Esophagus squamous epithelium (tissue), 5 donors: ENCODE measurements at regions of chr10 and their contacts with region 1.

Region 1: DNA sequence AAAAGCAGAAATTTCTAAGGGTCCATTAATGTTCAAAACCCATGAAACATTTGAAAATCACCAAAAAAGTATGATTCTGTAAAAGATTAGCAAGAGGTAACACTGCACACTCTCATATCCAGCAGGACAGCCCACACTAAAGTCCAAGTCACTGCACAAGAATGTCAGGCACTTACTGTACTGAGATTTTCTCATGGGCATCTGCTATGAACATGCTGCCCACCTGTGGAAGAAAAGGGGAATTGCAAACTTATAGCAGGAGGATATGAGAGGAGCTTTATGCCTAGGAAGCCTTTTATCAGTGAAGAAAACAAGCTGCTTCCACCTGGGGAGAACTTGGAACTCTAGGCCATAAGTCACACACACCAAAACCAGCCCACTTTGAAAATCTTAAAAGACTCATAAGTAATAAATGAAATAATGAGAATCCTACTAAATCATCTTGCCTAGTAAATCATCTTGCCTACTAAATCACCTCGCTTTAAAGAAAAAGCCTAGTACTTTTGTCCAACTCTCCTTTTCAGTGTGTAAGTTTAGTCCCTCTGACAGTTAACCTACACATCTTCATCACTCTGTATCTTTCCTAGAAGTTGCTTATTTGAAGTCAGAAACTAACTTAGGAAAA is 46.1 kb downstream of the ARMH3 start:
- DNase-seq: no peak
- H3K4me3 ChIP-seq: no peak overlapping the region
- H3K27ac ChIP-seq: no peak overlapping the region
- H3K4me1 ChIP-seq: peaks cover 0 to 4% (median 0%) of the 10 kb centered on the region in 3 donors
- H3K27me3 ChIP-seq: no peaks in the 10 kb centered on the region
- CTCF ChIP-seq: peak; percentile 74 to 90 (median 86)
- POLR2A ChIP-seq: no peak

Region 2: GRCh38 chr10:101840741-101841453 is 169.0 kb before region 1 on chr10:
- intact Hi-C with region 1: loop called (anchors 10 kb)
- DNase-seq: no peak
- H3K4me3 ChIP-seq: peak overlapping the region in 3 of 4 donors; percentile 24 to 60 (median 41)
- H3K27ac ChIP-seq: no peak overlapping the region
- H3K4me1 ChIP-seq: peaks cover 23 to 49% (median 30%) of the 10 kb centered on the region in 3 donors
- H3K27me3 ChIP-seq: no peaks in the 10 kb centered on the region
- CTCF ChIP-seq: peak; percentile 81 to 90 (median 86)
- POLR2A ChIP-seq: no peak

Region 3: DNA sequence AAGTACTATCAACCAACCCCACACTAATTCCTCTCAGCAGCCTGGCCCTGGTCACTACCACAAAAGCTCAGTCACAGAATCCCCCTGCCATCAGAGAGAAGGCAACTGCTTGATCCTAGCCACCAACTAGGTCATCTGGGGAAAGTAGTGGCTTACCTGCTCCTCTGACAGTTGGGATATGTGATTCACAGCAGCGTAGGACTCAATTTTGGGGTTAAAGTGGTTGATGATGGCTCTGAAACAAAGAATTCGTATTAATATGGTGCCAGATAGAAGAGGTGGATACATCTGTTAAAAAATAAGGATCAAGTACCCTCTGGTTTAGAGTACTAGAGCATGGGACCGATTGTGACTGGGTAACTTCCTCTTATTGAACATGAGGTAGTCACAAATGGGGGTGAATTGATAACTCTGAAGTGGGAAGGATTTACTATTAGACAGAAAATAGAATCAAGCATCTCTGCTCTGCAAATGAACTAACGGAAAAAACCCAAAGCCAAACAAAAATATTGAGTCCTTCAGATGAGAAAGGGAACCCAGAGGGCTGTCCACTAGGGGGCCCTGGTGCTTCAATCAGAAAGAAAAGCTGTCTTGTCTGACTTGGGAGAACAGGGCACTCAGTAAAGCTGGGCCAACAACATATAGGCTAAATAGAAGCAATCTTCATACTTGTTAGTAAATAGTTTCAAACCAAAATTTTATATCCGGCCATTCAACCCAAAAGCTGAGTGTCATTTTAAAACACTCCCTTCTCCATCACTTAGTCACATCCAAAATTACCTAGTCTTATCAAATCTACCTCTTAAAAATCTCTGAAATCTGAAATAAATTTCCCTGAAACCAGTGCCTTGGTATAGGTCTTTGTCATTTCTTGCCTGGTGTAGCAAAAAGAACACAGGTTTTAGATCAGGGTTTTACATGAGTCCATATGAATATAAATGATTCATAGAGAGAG is 120.4 kb before region 1 on chr10:
- intact Hi-C with region 1: loop called (anchors 10 kb)
- DNase-seq: peak; percentile 16
- H3K4me3 ChIP-seq: no peak overlapping the region
- H3K27ac ChIP-seq: no peak overlapping the region
- H3K4me1 ChIP-seq: peaks cover 0 to 4% (median 0%) of the 10 kb centered on the region in 3 donors
- H3K27me3 ChIP-seq: no peaks in the 10 kb centered on the region
- CTCF ChIP-seq: peak; percentile 58 to 74 (median 65)
- POLR2A ChIP-seq: no peak